ENCODE measurements at regions of chr16 and their contacts with region 1.

Region 1: GRCh38 chr16:46801428-46802049 is 29.4 kb downstream of the C16orf87 start:
- DNase-seq: no peak
- ATAC-seq: no peak
- H3K4me3 ChIP-seq: no peak overlapping the region
- H3K27ac ChIP-seq: no peak overlapping the region
- H3K4me1 ChIP-seq: no peaks in the 10 kb centered on the region
- H3K27me3 ChIP-seq: no peaks in the 10 kb centered on the region

Region 2: GRCh38 chr16:46673320-46674013 is 128.1 kb before region 1 on chr16:
- intact Hi-C with region 1: loop called in 2 of 4 experiments (anchors 5 to 10 kb)
- DNase-seq: peak in 2 of 3 donors; percentile 23 to 52
- ATAC-seq: peak; percentile 83 to 88
- H3K4me3 ChIP-seq: no peak overlapping the region
- H3K27ac ChIP-seq: no peak overlapping the region
- H3K4me1 ChIP-seq: no peaks in the 10 kb centered on the region
- H3K27me3 ChIP-seq: no peaks in the 10 kb centered on the region

Region 3: DNA sequence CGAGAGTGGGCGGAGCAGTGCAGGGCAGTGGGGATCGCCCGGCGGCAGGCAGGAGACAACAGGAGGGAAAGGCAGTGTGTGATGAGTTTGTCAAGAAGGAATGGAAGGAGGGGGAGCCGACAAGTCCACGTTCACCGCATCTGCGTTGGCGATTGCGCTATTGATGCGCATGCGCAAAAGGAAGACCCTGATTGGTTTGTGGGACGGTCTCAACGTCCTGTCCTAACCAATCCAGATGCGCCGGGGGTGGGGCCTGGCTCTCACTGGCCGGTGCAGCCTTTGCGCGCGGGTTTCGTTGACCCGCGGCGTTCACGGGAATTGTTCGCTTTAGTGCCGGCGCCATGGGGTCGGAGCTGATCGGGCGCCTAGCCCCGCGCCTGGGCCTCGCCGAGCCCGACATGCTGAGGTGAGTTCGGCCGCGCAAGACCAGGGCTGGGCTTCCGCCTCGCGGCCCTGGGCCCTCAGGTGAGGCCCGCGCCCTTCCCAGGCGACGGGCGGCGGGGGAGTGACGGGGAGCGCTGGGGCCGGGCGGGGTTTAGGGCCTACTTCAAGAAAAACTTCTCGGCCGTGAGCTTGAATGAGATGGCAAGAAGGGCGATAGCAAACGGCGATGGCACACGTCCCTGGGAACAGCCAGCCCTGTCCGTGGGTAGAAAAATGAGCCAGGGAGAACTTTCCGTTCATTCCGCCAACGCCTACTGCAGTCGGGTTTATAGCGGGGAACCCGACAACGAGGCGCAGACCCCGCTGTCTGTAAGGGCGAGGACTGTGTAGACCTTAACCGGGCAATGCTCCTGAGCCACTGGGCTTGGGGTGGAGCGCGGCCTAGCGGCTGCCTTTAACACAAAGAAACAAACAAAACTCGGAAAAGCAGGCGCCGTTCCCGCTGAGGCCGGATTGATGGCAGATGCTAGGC is 111.9 kb before region 1 on chr16 and contains the start of gene ORC6:
- intact Hi-C with region 1: loop called in 1 of 4 experiments (anchors 10 kb)
- DNase-seq: peak; percentile 98 to 100 (median 99)
- ATAC-seq: peak; percentile 95
- H3K4me3 ChIP-seq: peak within 1 kb of the TSS; percentile 72
- H3K27ac ChIP-seq: peak within 1 kb of the TSS; percentile 87
- H3K4me1 ChIP-seq: peaks cover 5% of the 10 kb centered on the region
- H3K27me3 ChIP-seq: no peaks in the 10 kb centered on the region
- total RNA-seq, gene ORC6: 2.5 to 7.2 (median 4.6) TPM

Region 4: GRCh38 chr16:46961373-46962353 is 160.1 kb after region 1 on chr16:
- intact Hi-C with region 1: no loop called
- DNase-seq: no peak
- ATAC-seq: peak in 1 of 2 donors; percentile 44
- H3K4me3 ChIP-seq: no peak overlapping the region
- H3K27ac ChIP-seq: no peak overlapping the region
- H3K4me1 ChIP-seq: no peaks in the 10 kb centered on the region
- H3K27me3 ChIP-seq: no peaks in the 10 kb centered on the region